Uterus (tissue), 4 donors: ENCODE measurements at regions of chr2 and their contacts with region 1.

Region 1: GRCh38 chr2:26605195-26605998 is 35.8 kb downstream of the CIB4 start:
- DNase-seq: peak in 1 of 2 donors; percentile 22
- H3K4me3 ChIP-seq: no peak overlapping the region
- H3K27ac ChIP-seq: no peak overlapping the region
- H3K4me1 ChIP-seq: no peaks in the 10 kb centered on the region
- H3K27me3 ChIP-seq: no peaks in the 10 kb centered on the region
- CTCF ChIP-seq: peak; percentile 57 to 86 (median 80)
- POLR2A ChIP-seq: no peak

Region 2: DNA sequence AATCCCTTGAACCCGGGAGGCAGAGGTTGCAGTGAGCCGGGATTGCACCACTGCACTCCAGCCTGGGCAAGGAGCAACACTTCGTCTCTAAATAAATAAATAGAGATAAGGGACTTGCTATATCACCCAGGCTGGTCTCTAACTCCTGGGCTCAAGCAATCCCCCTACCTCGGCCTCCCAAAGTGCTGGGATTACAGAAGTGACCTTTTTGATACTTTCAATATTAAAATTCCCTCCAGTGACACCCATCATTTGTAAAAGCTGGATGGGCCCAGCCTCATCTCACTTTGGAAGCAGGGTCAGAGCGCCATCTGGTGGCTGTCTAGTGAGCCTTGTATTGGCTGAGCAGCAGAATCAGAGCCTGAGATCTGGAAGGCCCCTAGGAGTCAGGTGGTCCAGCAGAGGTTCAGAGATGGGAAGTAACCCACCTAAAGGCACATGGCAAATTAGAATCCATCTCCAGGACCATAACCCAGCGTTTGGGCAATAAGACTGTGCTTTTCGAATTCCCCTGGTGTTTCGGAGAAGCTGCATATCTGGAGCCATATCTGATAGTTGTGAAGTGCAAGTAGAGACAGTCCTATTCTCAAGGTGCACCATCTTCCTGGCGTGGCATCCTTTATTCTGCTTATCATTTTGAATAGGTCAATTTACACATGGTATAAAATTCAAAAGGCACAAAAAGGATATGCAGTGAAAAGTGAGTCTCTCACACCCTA is 140.4 kb after region 1 on chr2:
- intact Hi-C with region 1: loop called (anchors 5 kb)
- DNase-seq: peak; percentile 76 to 80
- H3K4me3 ChIP-seq: no peak overlapping the region
- H3K27ac ChIP-seq: no peak overlapping the region
- H3K4me1 ChIP-seq: no peaks in the 10 kb centered on the region
- H3K27me3 ChIP-seq: no peaks in the 10 kb centered on the region
- CTCF ChIP-seq: peak; percentile 83 to 94 (median 88)
- POLR2A ChIP-seq: no peak

Region 3: DNA sequence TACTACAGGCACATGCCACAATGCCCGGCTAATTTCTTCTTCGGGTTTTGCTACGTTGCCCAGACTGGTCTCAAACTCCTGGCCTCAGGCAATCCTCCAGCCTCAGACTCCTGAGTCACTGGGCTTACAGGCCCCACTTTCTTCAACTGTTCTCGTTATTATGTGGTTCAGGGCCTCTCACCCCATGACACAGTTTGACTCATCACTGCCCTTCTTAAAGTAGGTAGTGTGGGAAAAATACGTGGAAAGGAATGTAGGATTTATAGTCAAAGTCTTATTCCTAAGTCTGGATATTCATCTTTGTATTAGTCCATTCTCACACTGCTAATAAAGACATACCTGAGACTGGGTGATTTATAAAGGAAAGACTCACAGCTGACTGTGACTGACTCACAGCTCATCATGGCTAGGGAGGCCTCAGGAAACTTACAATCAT is 199.9 kb after region 1 on chr2:
- intact Hi-C with region 1: no loop called
- DNase-seq: no peak
- H3K4me3 ChIP-seq: no peak overlapping the region
- H3K27ac ChIP-seq: no peak overlapping the region
- H3K4me1 ChIP-seq: no peaks in the 10 kb centered on the region
- H3K27me3 ChIP-seq: no peaks in the 10 kb centered on the region
- CTCF ChIP-seq: no peak
- POLR2A ChIP-seq: no peak